HCT116 (cell line): ENCODE measurements at regions of chr12 and their contacts with region 1.

Region 1: DNA sequence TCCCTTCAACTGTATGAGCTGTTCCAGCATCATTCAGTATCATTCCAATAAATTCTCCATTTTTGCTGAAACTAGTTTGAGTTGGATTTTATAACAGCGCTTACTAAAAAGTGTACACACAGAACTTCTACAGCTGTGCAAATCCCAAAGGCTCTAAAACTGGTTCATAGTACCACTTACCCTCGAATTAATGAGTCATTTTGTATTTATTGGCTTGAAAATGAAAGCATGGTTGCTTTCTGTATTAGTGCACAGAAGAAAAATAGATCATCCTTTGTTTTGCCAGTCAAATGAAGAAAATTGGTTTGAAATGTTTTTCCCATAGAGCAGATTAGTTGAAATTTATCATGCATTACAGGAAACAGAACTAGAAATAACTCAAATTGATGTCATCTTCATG is 268.3 kb upstream of the CPNE8 start:
- DNase-seq: no peak
- ATAC-seq: no peak
- H3K4me3 ChIP-seq: no peak overlapping the region
- H3K27ac ChIP-seq: no peak overlapping the region
- H3K4me1 ChIP-seq: no peaks in the 10 kb centered on the region
- H3K27me3 ChIP-seq: no peaks in the 10 kb centered on the region
- CTCF ChIP-seq: no peak
- POLR2A ChIP-seq: no peak
- RAD21 ChIP-seq: no peak

Region 2: GRCh38 chr12:38983117-38983902 is 190.4 kb before region 1 on chr12:
- CTCF ChIA-PET with region 1: no interaction called
- POLR2A ChIA-PET with region 1: no interaction called
- RAD21 ChIA-PET with region 1: no interaction called
- intact Hi-C with region 1: no loop called
- DNase-seq: no peak
- ATAC-seq: no peak
- H3K4me3 ChIP-seq: no peak overlapping the region
- H3K27ac ChIP-seq: no peak overlapping the region
- H3K4me1 ChIP-seq: no peaks in the 10 kb centered on the region
- H3K27me3 ChIP-seq: no peaks in the 10 kb centered on the region
- CTCF ChIP-seq: no peak
- POLR2A ChIP-seq: no peak
- RAD21 ChIP-seq: no peak

Region 3: DNA sequence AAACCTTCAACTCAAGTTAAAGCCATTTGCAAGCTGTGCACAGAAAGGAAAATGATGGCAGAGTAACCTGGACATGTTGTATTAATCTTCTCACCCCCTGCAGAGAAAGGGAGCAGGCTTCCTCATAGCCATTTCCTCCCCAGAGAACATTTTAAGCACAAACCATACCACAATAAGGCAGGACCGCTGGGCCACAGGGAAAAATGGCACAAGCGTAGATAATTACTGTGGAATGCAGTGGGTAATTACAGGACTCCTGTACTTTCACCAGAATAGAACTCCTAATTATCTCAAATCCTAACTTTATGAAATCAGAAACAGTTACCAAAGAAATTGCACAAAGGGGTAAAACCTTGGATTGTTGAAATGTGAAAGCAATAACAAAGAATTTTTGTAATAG is 53.5 kb after region 1 on chr12:
- CTCF ChIA-PET with region 1: no interaction called
- POLR2A ChIA-PET with region 1: no interaction called
- RAD21 ChIA-PET with region 1: no interaction called
- intact Hi-C with region 1: loop called (anchors 10 kb)
- DNase-seq: no peak
- ATAC-seq: no peak
- H3K4me3 ChIP-seq: no peak overlapping the region
- H3K27ac ChIP-seq: no peak overlapping the region
- H3K4me1 ChIP-seq: 0 out of 4 replicates have a peak, but pooled peaks cover 0 to 3% of the 10 kb centered on the region in 2 experiments
- H3K27me3 ChIP-seq: no peaks in the 10 kb centered on the region
- CTCF ChIP-seq: no peak
- POLR2A ChIP-seq: no peak
- RAD21 ChIP-seq: no peak

Region 4: DNA sequence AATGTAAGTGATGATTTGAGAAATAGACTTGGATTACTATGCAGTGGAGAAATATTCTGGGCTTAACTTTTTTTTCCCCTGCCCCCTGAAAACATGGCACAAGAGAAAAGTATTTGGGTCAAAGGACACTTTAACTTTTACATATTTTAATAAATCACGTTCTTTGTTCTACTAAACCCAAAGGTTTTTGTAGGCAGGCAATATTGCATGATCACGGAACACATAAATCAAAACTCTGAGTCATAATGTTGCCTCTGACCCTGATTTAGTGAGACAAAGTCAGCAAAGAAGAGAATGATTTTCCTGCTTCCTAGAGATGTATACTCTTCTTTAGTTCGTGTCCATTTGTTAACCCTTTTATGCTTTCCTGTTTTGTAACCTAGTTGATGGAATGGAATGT is 407.9 kb after region 1 on chr12:
- CTCF ChIA-PET with region 1: no interaction called
- POLR2A ChIA-PET with region 1: no interaction called
- RAD21 ChIA-PET with region 1: no interaction called
- intact Hi-C with region 1: no loop called
- DNase-seq: peak; percentile 8
- ATAC-seq: peak; percentile 44; the same call in 1 of the 2 replicates
- H3K4me3 ChIP-seq: no peak overlapping the region
- H3K27ac ChIP-seq: no peak overlapping the region
- H3K4me1 ChIP-seq: peaks cover 5 to 8% of the 10 kb centered on the region in 2 experiments; a peak in 3 of 4 replicates
- H3K27me3 ChIP-seq: no peaks in the 10 kb centered on the region
- CTCF ChIP-seq: no peak
- POLR2A ChIP-seq: no peak
- RAD21 ChIP-seq: no peak